ENCODE measurements at regions of chr2 and their contacts with region 1.

Region 1: DNA sequence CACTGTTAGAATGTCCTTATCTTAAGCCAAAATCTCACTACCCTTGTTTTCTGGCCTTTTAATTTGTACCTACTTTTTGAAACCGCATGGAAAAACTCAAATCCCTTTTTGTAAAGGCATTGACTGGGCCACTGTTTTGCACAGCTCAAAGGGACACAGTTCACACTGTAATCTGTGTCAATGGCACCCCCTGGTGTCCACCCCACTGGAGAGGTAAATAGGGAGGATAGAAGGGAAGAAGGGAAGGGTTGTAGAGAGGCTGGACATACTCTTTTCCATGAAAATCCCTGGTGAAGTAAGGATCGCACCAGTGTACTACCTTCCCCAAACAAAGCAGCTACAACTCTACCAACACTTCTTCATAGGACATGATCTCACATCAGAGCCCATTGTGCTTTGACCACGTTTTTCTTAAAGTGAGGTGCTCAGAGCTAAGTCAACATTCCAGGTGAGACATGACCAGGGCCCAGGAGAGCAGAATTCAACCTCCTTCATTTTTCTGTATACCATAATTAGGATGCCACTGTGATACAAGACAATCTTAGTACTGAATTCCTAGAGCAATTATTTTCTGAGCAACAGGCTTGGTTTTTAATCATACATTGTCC is 92.4 kb upstream of the RMDN2 start:
- DNase-seq: peak; percentile 69
- CTCF ChIP-seq: peak; percentile 91

Region 2: GRCh38 chr2:37389989-37390765 is 442.5 kb before region 1 on chr2:
- CTCF ChIA-PET with region 1: interaction called, 66 read pairs
- POLR2A ChIA-PET with region 1: no interaction called
- DNase-seq: peak; percentile 83
- CTCF ChIP-seq: no peak

Region 3: GRCh38 chr2:37623971-37624900 is 208.5 kb before region 1 on chr2:
- CTCF ChIA-PET with region 1: interaction called, 10 read pairs
- POLR2A ChIA-PET with region 1: no interaction called
- DNase-seq: peak; percentile 69
- CTCF ChIP-seq: no peak

Region 4: GRCh38 chr2:37653805-37654378 is 178.8 kb before region 1 on chr2:
- CTCF ChIA-PET with region 1: interaction called, 20 read pairs
- POLR2A ChIA-PET with region 1: no interaction called
- DNase-seq: peak; percentile 45
- CTCF ChIP-seq: no peak

Region 5: GRCh38 chr2:37843556-37843955 is 10.9 kb after region 1 on chr2:
- CTCF ChIA-PET with region 1: interaction called, 13 read pairs
- POLR2A ChIA-PET with region 1: no interaction called
- DNase-seq: no peak
- CTCF ChIP-seq: no peak

Region 6: DNA sequence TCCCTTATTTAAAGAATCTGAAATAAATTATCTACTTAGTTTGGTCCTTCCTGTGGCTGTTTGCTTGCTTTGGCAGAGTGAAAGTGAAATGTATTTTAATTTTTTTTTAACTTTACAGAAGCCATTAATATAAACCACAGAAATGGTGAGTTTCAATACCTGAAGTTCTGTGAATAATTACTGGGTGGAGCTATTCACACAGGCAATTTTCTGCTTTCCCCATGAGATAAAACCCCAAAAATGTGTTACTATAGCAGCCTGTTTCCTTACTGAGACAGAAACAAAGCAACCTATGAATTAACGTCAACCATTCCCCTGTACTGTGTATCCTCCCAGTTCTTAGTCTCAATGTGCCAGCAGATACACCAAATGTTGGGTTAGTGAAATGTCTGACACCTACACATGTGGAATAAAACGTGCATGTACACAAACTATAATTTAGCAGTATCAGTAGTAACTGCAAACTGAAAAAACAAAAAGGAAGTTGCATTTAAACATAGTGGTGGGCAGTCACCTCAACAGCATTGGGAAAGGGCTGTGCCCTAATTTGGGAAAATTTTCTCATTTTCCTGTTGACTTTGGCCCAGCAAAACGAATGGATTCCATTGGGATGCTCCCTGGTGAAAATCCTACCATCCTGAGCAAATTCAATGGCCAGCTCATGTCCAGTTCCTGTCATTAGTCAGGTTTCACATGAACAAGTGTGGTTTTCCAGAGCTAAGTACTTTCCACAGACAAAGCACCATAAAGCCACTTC is 19.3 kb after region 1 on chr2:
- CTCF ChIA-PET with region 1: interaction called, 27 read pairs
- POLR2A ChIA-PET with region 1: no interaction called
- DNase-seq: peak; percentile 66
- CTCF ChIP-seq: no peak

Region 7: GRCh38 chr2:37896314-37896713 is 63.6 kb after region 1 on chr2:
- CTCF ChIA-PET with region 1: interaction called, 11 read pairs
- POLR2A ChIA-PET with region 1: no interaction called
- DNase-seq: no peak
- CTCF ChIP-seq: peak; percentile 22

Region 8: GRCh38 chr2:38661306-38661705 is 828.6 kb after region 1 on chr2:
- CTCF ChIA-PET with region 1: no interaction called
- POLR2A ChIA-PET with region 1: no interaction called
- DNase-seq: no peak
- CTCF ChIP-seq: no peak

Measured in GM10248 (cell line).